ENCODE measurements at regions of chr1 and their contacts with region 1.

Region 1: GRCh38 chr1:209565759-209566678 is 17.5 kb upstream of the CAMK1G start:
- DNase-seq: peak; percentile 78 to 88 (median 83)
- H3K4me3 ChIP-seq: no peak overlapping the region
- H3K27ac ChIP-seq: no peak overlapping the region
- H3K4me1 ChIP-seq: no peaks in the 10 kb centered on the region
- H3K27me3 ChIP-seq: peaks cover 0 to 18% (median 8%) of the 10 kb centered on the region in 5 experiments

Region 2: DNA sequence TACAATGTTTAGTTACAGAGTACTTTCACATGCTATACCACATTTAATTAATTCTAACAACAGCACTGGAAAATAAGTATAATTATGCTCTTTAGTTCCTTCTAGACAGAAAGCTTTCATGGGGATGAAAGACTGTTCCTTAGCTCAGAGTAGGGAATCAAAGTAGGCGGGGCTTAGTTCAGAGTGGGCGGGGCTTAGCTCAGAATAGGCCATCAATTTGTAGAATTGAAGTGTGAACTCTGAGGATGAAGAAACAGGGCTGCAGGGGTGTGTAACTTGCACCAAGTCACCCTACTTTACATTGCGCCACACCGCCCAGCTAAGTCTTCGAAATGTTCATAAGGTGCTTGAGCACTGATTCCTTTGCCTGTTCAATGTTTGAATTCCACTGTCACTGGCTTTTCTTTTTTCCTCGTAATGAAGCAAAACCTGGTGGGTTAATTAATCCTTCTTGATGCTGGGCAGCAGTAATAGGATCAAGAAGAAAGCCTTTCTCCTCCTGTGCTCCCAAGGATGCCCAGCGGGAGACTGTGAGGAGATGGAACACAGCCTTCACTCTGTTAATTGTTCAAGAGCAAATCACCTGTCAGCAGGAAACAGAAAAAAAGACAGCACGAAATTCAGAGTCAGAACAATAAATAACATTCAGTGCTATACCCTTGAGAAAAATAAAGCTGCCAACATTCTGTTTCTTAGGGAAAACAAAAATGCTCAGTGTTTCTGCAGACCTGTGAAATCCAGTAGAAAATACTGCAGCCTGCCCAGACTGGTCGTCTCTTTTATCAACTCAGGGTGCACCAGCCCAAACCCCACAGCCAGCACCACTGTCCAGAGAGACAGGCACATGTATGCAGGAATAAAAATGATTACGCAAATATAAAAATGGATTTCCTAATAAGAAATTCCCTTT is 49.0 kb before region 1 on chr1:
- CTCF ChIA-PET with region 1: no interaction called
- POLR2A ChIA-PET with region 1: no interaction called
- DNase-seq: no peak
- H3K4me3 ChIP-seq: no peak overlapping the region
- H3K27ac ChIP-seq: no peak overlapping the region
- H3K4me1 ChIP-seq: no peaks in the 10 kb centered on the region
- H3K27me3 ChIP-seq: peaks cover 0 to 2% (median 0%) of the 10 kb centered on the region in 5 experiments

Region 3: GRCh38 chr1:209576798-209577197 is 10.8 kb after region 1 on chr1:
- CTCF ChIA-PET with region 1: interaction called, 19 read pairs
- POLR2A ChIA-PET with region 1: no interaction called
- DNase-seq: peak; percentile 30 to 51 (median 49)
- H3K4me3 ChIP-seq: no peak overlapping the region
- H3K27ac ChIP-seq: no peak overlapping the region
- H3K4me1 ChIP-seq: no peaks in the 10 kb centered on the region
- H3K27me3 ChIP-seq: peaks cover 4 to 20% (median 6%) of the 10 kb centered on the region in 5 experiments

Region 4: GRCh38 chr1:209585672-209586071 is 19.7 kb after region 1 on chr1:
- CTCF ChIA-PET with region 1: interaction called, 17 read pairs
- POLR2A ChIA-PET with region 1: no interaction called
- DNase-seq: peak; percentile 24 to 70 (median 59)
- H3K4me3 ChIP-seq: peak overlapping the region in 2 of 7 experiments; percentile 1 to 19
- H3K27ac ChIP-seq: no peak overlapping the region
- H3K4me1 ChIP-seq: peaks cover 0 to 11% (median 5%) of the 10 kb centered on the region in 4 experiments
- H3K27me3 ChIP-seq: peaks cover 18 to 61% (median 30%) of the 10 kb centered on the region in 5 experiments